Heart right ventricle (tissue), 16 donors: ENCODE measurements at regions of chr1 and their contacts with region 1.

Region 1: GRCh38 chr1:36239941-36240637 is 15.8 kb downstream of the THRAP3 start:
- DNase-seq: peak in 1 of 2 donors; percentile 79
- ATAC-seq: peak; percentile 88 to 98 (median 94)
- H3K4me3 ChIP-seq: no peak overlapping the region
- H3K27ac ChIP-seq: peak overlapping the region in 9 of 10 donors; percentile 22 to 68 (median 46)
- H3K4me1 ChIP-seq: peaks cover 31 to 90% (median 66%) of the 10 kb centered on the region in 9 donors
- H3K27me3 ChIP-seq: no peaks in the 10 kb centered on the region
- CTCF ChIP-seq: no peak

Region 2: DNA sequence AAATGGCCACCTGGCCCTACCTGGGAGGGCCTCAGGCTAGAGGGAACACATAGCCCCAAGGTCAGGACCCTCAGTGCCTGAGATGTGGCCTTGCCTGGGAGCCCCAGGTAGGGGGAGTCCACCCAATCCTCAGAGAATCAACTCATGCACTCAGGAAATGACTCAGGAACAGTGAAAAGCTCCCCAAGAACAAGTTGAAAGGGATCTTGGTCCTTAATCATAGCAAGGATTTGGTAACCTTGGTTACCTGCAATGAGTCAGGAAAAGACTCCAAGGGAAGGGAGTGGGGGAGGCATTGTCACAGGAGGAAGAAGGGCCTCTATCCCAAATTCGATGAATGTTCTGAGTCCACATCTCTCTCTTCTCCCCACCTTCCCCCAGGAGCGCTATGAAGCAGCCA is 67.1 kb before region 1 on chr1:
- intact Hi-C with region 1: loop called in 1 of 10 experiments (anchors 5 kb)
- DNase-seq: no peak
- ATAC-seq: no peak
- H3K4me3 ChIP-seq: no peak overlapping the region
- H3K27ac ChIP-seq: peak overlapping the region in 9 of 10 donors; percentile 7 to 100 (median 87)
- H3K4me1 ChIP-seq: peaks cover 39 to 98% (median 79%) of the 10 kb centered on the region in 9 donors
- H3K27me3 ChIP-seq: no peaks in the 10 kb centered on the region
- CTCF ChIP-seq: no peak

Region 3: GRCh38 chr1:36258962-36259349 is 18.9 kb after region 1 on chr1:
- intact Hi-C with region 1: loop called in 1 of 10 experiments (anchors 2 kb)
- DNase-seq: no peak
- ATAC-seq: no peak
- H3K4me3 ChIP-seq: no peak overlapping the region
- H3K27ac ChIP-seq: peak overlapping the region in 1 of 10 donors; percentile 4
- H3K4me1 ChIP-seq: peaks cover 0 to 72% (median 46%) of the 10 kb centered on the region in 9 donors
- H3K27me3 ChIP-seq: no peaks in the 10 kb centered on the region
- CTCF ChIP-seq: no peak